ENCODE measurements at regions of chr21 and their contacts with region 1.

Region 1: DNA sequence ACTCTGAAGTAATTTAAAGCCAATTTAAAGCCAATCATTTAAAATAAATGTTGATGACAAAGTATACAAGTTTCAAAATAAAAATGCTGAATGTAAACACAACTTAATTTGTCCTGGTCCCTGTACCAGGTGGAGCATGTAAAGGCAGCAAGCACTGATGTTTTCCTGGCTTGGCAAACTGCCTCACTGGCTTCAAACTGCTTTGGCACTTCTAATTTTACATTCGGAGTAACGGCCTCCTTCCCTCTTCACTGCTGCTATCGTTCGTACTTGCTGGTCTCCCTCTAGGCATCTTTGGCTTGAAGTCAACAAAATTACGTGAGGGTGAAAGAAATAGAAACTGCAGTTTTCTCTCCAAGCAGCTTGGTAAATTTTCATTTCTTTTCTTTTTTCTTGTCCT is 287.9 kb downstream of the LTN1 start:
- DNase-seq: peak; percentile 14 to 75
- ATAC-seq: peak; percentile 7 to 97 (median 82)
- H3K4me3 ChIP-seq: no peak overlapping the region
- H3K27ac ChIP-seq: peak overlapping the region in 3 of 10 donors; percentile 1 to 30 (median 25)
- H3K4me1 ChIP-seq: peaks cover 0 to 19% (median 4%) of the 10 kb centered on the region in 9 donors
- H3K27me3 ChIP-seq: no peaks in the 10 kb centered on the region
- CTCF ChIP-seq: no peak

Region 2: DNA sequence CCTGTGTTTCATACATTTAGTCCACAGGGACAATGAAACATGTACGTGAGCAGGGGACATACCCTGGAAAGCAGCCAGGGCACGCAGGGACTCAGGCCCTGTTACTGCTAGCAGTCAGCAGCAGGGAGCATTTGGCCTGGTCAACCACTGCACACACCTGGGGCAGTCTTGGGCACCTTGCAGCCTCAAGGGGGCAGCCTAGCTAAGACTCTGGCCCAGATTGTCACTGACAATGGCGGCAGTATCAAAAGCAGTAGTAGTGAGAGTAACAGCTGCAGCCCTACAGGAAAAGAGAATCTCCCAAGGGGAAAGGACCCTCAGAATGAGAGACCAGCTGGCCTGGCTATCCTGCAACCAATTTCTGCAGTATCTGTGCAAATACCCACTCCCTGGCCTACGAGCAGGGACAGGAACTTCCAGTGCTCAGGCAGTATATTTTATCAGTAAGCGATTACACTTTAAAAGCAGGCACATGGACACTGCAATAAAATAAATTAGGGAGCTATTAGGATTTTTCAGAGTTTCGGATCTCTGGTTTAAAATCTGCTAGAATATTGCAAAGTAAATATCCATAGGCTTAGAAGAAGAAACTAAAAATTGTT is 187.7 kb before region 1 on chr21:
- intact Hi-C with region 1: no loop called
- DNase-seq: peak; percentile 65 to 74
- ATAC-seq: peak; percentile 92 to 97 (median 95)
- H3K4me3 ChIP-seq: peak overlapping the region in 1 of 10 donors; percentile 11
- H3K27ac ChIP-seq: peak overlapping the region in 2 of 10 donors; percentile 4 to 53
- H3K4me1 ChIP-seq: peaks cover 0 to 34% (median 16%) of the 10 kb centered on the region in 9 donors
- H3K27me3 ChIP-seq: no peaks in the 10 kb centered on the region
- CTCF ChIP-seq: peak; percentile 53 to 86 (median 71)

Region 3: GRCh38 chr21:28737674-28738419 is 33.1 kb after region 1 on chr21:
- intact Hi-C with region 1: loop called in 1 of 10 experiments (anchors 2 kb)
- DNase-seq: no peak
- ATAC-seq: peak; percentile 36 to 88 (median 72)
- H3K4me3 ChIP-seq: no peak overlapping the region
- H3K27ac ChIP-seq: peak overlapping the region in 8 of 10 donors; percentile 6 to 76 (median 58)
- H3K4me1 ChIP-seq: peaks cover 0 to 27% (median 19%) of the 10 kb centered on the region in 9 donors
- H3K27me3 ChIP-seq: no peaks in the 10 kb centered on the region
- CTCF ChIP-seq: no peak

Region 4: DNA sequence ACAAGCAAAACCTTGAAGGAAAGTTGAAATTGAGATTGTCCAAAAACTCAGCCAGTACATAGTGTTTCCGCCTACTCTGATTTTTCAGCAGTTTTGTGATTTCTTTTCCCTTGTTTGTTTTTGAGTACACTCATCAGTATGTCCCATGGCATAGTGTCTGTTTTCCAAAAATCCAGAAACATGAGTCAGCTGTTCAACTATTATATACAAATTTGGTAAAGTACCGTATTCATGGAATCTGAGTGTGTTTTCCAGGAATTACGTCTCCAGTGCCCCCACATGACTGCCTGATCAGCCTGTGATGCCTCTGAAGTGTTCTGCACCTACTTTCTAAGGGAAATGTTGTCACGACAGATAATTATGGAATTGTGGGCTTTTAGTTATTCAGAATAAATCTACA is 101.1 kb after region 1 on chr21:
- intact Hi-C with region 1: no loop called
- DNase-seq: no peak
- ATAC-seq: peak in 3 of 8 donors; percentile 7 to 79 (median 33)
- H3K4me3 ChIP-seq: no peak overlapping the region
- H3K27ac ChIP-seq: no peak overlapping the region
- H3K4me1 ChIP-seq: peaks cover 0 to 7% (median 0%) of the 10 kb centered on the region in 9 donors
- H3K27me3 ChIP-seq: no peaks in the 10 kb centered on the region
- CTCF ChIP-seq: no peak

Region 5: DNA sequence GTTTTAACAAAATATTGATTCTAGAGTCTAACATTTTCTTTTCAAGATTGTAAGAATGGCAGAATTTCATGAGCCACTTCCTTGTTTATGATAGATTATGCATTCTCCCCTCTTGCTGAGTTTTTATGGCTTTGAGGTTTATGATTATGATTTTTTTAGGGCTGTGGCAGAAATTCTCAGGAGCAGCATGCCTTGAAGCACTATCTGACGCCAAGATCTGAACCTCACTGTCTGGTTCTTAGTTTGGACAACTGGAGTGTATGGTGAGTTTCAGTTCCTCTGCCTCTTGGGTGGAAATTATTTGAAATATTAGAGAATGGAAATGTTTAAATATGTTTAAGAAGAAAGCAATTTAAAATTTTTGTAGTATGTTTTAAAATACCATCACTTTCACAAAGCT is 329.9 kb after region 1 on chr21:
- intact Hi-C with region 1: no loop called
- DNase-seq: no peak
- ATAC-seq: no peak
- H3K4me3 ChIP-seq: no peak overlapping the region
- H3K27ac ChIP-seq: no peak overlapping the region
- H3K4me1 ChIP-seq: no peaks in the 10 kb centered on the region
- H3K27me3 ChIP-seq: no peaks in the 10 kb centered on the region
- CTCF ChIP-seq: no peak

Measured in heart right ventricle (tissue), 16 donors.